CD4-positive, alpha-beta T cell (primary cell): ENCODE measurements at regions of chr1 and their contacts with region 1.

Region 1: DNA sequence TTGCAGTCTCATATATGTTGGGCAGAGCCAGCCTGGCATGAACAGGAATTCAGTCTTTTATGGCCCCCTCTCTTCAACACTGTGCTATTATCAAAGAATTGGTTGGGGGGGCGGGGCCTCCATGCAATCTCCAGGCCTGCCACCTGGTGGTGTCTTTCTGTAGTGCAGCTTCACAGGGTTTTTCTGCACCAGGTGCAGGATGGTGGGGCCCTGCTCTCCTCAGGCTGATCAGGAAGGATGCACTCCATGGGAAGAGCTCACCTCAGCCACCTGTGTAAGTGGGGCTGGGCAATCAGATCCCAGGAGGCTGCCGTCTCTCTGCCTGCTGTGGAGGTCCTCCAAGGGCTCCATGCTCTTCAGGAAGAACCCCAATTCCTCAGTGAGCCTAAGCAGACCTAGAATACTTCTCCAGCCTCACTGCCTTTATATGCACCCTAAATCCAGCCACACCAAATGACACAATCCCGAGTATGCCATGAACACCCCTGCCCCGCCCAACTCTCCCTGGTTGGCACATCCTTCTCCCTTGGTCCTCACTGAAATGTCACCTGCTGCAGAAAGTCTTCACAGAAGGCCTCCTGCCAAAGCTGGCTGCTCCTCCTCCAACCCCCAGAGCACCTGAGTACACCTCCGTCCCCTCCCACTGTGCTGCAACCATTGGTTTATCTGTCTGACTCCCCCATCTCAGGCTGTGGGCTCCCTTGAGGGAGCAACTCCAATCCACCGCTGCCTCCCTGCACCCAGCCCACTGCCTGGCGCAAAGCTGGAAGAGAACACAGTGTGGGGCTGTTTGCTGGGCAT is 16.5 kb downstream of the STK40 start:
- DNase-seq: peak; percentile 76 to 91 (median 84)
- ATAC-seq: peak; percentile 54
- H3K4me3 ChIP-seq: no peak overlapping the region
- H3K4me3 Mint-ChIP-seq: peak overlapping the region; percentile 14
- H3K27ac ChIP-seq: peak overlapping the region; percentile 3 to 54
- H3K27ac Mint-ChIP-seq: peak overlapping the region; percentile 88
- H3K4me1 ChIP-seq: peaks cover 79% of the 10 kb centered on the region
- H3K4me1 Mint-ChIP-seq: peaks cover 78% of the 10 kb centered on the region
- H3K27me3 ChIP-seq: no peaks in the 10 kb centered on the region
- H3K27me3 Mint-ChIP-seq: no peaks in the 10 kb centered on the region
- CTCF ChIP-seq: peak; percentile 91

Region 2: DNA sequence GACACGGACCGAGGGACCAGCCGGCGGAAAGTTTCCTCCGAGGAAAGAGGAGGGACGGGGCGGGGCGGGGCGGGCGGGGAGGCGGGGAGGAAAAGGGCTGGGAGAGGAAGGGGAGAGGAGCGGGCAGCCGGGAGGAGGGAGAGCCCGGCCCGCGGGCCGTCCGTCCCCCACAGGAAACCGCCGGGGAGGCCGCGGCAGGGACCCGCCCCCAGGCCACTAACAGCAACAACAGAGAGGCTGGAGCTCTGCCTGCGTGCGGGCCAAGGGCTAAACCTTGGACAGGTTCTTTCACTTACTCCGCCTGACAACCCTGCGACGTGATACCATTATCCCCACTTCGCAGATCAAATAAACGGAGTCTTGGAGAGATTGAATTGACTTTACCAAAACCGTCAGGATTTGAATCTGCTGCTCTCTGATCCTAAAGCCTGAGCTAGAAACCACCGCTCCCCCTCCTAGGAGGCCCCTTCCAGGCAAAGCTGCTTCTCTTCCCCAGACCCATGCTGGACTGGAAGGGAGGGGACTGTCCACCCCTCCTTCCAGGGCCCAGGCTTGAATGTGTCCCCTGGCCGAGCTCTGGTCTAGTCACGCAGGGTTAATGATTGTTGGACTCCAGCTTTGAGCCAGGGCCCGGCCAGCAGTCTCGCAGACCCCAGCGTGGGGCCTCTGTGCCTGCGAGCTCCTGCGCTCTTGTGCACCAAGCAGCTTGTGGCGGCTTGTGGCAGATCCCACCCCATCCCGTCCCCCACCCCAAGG is 45.5 kb before region 1 on chr1 and contains the start of gene EVA1B:
- CTCF ChIA-PET with region 1: interaction called, 3 read pairs
- POLR2A ChIA-PET with region 1: interaction called, 6 read pairs
- intact Hi-C with region 1: loop called in 1 of 2 experiments (anchors 5 kb)
- DNase-seq: peak in 9 of 14 experiments; percentile 26 to 69 (median 49)
- ATAC-seq: peak; percentile 20
- H3K4me3 ChIP-seq: peak within 1 kb of the TSS; percentile 61
- H3K4me3 Mint-ChIP-seq: peak within 1 kb of the TSS; percentile 85
- H3K27ac ChIP-seq: no peak within 1 kb of the TSS
- H3K27ac Mint-ChIP-seq: no peak within 1 kb of the TSS
- H3K4me1 ChIP-seq: peaks cover 42% of the 10 kb centered on the region
- H3K4me1 Mint-ChIP-seq: peaks cover 30% of the 10 kb centered on the region
- H3K27me3 ChIP-seq: no peaks in the 10 kb centered on the region
- H3K27me3 Mint-ChIP-seq: no peaks in the 10 kb centered on the region
- CTCF ChIP-seq: no peak
- total RNA-seq, gene EVA1B: 1.5 to 1.8 TPM

Region 3: GRCh38 chr1:36350659-36351226 is 18.5 kb before region 1 on chr1:
- CTCF ChIA-PET with region 1: interaction called, 5 read pairs
- POLR2A ChIA-PET with region 1: interaction called, 73 read pairs
- intact Hi-C with region 1: loop called in 1 of 2 experiments (anchors 2 kb)
- DNase-seq: peak; percentile 23 to 82 (median 56)
- ATAC-seq: peak; percentile 99
- H3K4me3 ChIP-seq: no peak overlapping the region
- H3K4me3 Mint-ChIP-seq: peak overlapping the region; percentile 76
- H3K27ac ChIP-seq: peak overlapping the region; percentile 48 to 52
- H3K27ac Mint-ChIP-seq: peak overlapping the region; percentile 95
- H3K4me1 ChIP-seq: peaks cover 23% of the 10 kb centered on the region
- H3K4me1 Mint-ChIP-seq: peaks cover 26% of the 10 kb centered on the region
- H3K27me3 ChIP-seq: no peaks in the 10 kb centered on the region
- H3K27me3 Mint-ChIP-seq: no peaks in the 10 kb centered on the region
- CTCF ChIP-seq: no peak

Region 4: GRCh38 chr1:36397378-36398230 is 28.3 kb after region 1 on chr1 and contains the start of gene LSM10:
- CTCF ChIA-PET with region 1: interaction called, 9 read pairs
- POLR2A ChIA-PET with region 1: interaction called, 22 read pairs
- intact Hi-C with region 1: no loop called
- DNase-seq: peak; percentile 76 to 96 (median 88)
- ATAC-seq: peak; percentile 93
- H3K4me3 ChIP-seq: peak within 1 kb of the TSS; percentile 84
- H3K4me3 Mint-ChIP-seq: peak within 1 kb of the TSS; percentile 97
- H3K27ac ChIP-seq: peak within 1 kb of the TSS; percentile 72 to 85
- H3K27ac Mint-ChIP-seq: peak within 1 kb of the TSS; percentile 92
- H3K4me1 ChIP-seq: peaks cover 44% of the 10 kb centered on the region
- H3K4me1 Mint-ChIP-seq: peaks cover 34% of the 10 kb centered on the region
- H3K27me3 ChIP-seq: no peaks in the 10 kb centered on the region
- H3K27me3 Mint-ChIP-seq: no peaks in the 10 kb centered on the region
- CTCF ChIP-seq: no peak
- total RNA-seq, gene LSM10: 25.6 to 26.0 TPM

Region 5: GRCh38 chr1:36450270-36450918 is 81.1 kb after region 1 on chr1 and contains the start of gene OSCP1:
- CTCF ChIA-PET with region 1: no interaction called
- POLR2A ChIA-PET with region 1: interaction called, 11 read pairs
- intact Hi-C with region 1: no loop called
- DNase-seq: peak; percentile 63 to 94 (median 80)
- ATAC-seq: peak; percentile 92
- H3K4me3 ChIP-seq: peak within 1 kb of the TSS; percentile 83
- H3K4me3 Mint-ChIP-seq: peak within 1 kb of the TSS; percentile 95
- H3K27ac ChIP-seq: peak within 1 kb of the TSS; percentile 82 to 89
- H3K27ac Mint-ChIP-seq: peak within 1 kb of the TSS; percentile 91
- H3K4me1 ChIP-seq: peaks cover 15% of the 10 kb centered on the region
- H3K4me1 Mint-ChIP-seq: peaks cover 23% of the 10 kb centered on the region
- H3K27me3 ChIP-seq: no peaks in the 10 kb centered on the region
- H3K27me3 Mint-ChIP-seq: no peaks in the 10 kb centered on the region
- CTCF ChIP-seq: no peak
- total RNA-seq, gene OSCP1: 0.82 to 2.4 TPM